ENCODE measurements at regions of chr10 and their contacts with region 1.

Region 1: DNA sequence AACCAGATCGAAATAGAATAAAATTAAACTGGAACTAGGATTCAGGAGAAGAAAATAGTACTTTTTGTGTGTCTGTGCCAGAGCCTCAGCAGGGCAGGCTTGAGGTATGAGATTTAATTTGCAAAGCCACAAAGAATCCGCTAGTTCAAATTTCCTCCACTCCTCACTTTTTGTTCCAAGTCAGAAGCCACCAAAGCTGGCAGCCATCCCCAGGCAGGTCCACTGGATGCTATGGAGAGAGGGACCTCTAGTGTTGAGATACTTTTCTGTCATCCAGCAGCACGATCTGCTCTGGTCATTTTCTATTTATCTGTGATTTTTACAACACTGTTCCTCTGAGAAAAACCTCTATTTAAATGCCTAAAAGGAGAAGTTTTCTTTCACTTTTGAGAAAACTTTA is 147.9 kb upstream of the FRMD4A start:
- DNase-seq: peak; percentile 63
- H3K4me3 ChIP-seq: no peak overlapping the region
- H3K27ac ChIP-seq: peak overlapping the region; percentile 12
- H3K4me1 ChIP-seq: peaks cover 7% of the 10 kb centered on the region
- H3K27me3 ChIP-seq: peaks cover 11% of the 10 kb centered on the region
- CTCF ChIP-seq: peak; percentile 80

Region 2: GRCh38 chr10:14195433-14195832 is 283.2 kb before region 1 on chr10:
- intact Hi-C with region 1: loop called (anchors 5 kb)
- DNase-seq: no peak
- H3K4me3 ChIP-seq: no peak overlapping the region
- H3K27ac ChIP-seq: no peak overlapping the region
- H3K4me1 ChIP-seq: no peaks in the 10 kb centered on the region
- H3K27me3 ChIP-seq: peaks cover 74% of the 10 kb centered on the region
- CTCF ChIP-seq: no peak

Region 3: DNA sequence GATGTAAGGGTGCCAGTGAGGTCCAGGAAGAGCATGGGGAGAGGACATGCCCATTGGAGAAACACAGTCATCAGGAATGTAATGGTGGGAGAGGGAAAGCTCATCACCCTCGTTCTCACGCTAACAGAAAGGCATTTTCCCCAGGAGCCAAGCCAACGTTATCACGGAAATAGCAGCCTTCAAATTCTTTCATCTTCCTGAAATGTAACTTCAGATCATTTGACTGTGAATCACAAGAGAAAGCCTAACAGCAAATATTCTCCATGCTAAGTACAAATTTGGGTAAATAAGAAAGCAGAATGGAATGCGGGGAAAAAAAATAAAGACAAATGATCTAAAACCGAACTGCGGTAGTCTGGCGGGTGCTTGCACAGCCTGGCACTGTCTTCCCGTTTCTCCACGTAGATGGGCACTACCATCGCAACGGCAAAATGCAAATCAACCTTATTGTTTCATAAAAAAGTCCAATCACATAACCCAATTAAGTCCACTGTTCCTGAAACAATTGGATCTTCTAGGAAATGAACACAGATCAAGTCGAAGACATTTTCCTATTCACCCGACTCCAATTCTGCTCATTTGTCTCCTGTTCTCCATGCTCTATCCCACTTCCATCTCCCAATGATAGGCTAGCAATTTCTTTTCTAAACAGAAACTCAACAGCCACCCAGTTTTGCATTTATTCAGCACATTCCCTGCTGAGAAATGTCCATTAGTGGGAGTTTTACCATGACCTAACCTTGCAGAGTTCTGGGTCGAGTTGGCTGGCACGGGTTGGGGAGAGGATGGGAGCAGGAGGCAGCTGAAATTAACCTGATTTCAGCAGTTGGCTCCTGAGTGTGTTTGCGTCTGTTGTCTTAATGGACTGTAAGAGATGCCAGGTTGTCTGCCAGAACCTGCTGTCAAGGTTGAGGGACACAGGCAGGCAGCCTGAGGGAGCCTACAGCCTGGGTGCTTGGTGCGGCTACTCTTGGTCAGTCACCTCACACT is 73.2 kb before region 1 on chr10:
- intact Hi-C with region 1: no loop called
- DNase-seq: no peak
- H3K4me3 ChIP-seq: no peak overlapping the region
- H3K27ac ChIP-seq: no peak overlapping the region
- H3K4me1 ChIP-seq: peaks cover 7% of the 10 kb centered on the region
- H3K27me3 ChIP-seq: peaks cover 24% of the 10 kb centered on the region
- CTCF ChIP-seq: no peak

Measured in left ventricle myocardium inferior (tissue), 1 donor.